ENCODE measurements at regions of chrX and their contacts with region 1.

Region 1: DNA sequence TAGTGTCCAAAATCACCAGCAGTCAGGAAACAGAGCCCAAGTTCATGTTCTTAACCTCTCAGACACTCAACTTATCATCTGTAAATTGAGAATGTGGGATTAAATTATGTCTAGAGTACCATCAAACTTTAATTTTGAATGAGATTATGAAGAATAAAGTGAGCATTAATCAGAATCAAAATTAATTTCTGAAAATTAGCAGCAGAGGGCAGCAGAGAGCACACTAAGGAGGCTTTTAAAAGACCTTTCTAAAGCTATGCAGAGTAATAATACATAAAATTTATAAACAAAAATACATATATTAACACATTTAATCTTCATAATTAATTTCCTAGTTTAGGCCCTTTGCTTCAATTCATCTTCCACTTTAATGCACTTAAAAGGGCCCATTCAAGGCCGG is 7.1 kb downstream of the TASL start:
- DNase-seq: no peak
- ATAC-seq: no peak
- H3K4me3 Mint-ChIP-seq: no peak overlapping the region
- H3K27ac Mint-ChIP-seq: no peak overlapping the region
- H3K4me1 Mint-ChIP-seq: peaks cover 27% of the 10 kb centered on the region
- H3K27me3 Mint-ChIP-seq: no peaks in the 10 kb centered on the region

Region 2: GRCh38 chrX:30593435-30594200 is 23.1 kb after region 1 on chrX:
- CTCF ChIA-PET with region 1: interaction called, 16 read pairs
- POLR2A ChIA-PET with region 1: no interaction called
- DNase-seq: peak; percentile 34
- ATAC-seq: no peak
- H3K4me3 Mint-ChIP-seq: no peak overlapping the region
- H3K27ac Mint-ChIP-seq: no peak overlapping the region
- H3K4me1 Mint-ChIP-seq: peaks cover 17% of the 10 kb centered on the region
- H3K27me3 Mint-ChIP-seq: no peaks in the 10 kb centered on the region

Measured in activated CD8-positive, alpha-beta T cell treated with anti-CD3 and anti-CD28 coated beads, Interleukin-2, amount 10 ng/mL, durations not matched to agents 7 days and 5 days (primary cell).